Activated CD8-positive, alpha-beta T cell treated with anti-CD3 and anti-CD28 coated beads for 36 hours (primary cell): ENCODE measurements at regions of chr1 and their contacts with region 1.

Region 1: DNA sequence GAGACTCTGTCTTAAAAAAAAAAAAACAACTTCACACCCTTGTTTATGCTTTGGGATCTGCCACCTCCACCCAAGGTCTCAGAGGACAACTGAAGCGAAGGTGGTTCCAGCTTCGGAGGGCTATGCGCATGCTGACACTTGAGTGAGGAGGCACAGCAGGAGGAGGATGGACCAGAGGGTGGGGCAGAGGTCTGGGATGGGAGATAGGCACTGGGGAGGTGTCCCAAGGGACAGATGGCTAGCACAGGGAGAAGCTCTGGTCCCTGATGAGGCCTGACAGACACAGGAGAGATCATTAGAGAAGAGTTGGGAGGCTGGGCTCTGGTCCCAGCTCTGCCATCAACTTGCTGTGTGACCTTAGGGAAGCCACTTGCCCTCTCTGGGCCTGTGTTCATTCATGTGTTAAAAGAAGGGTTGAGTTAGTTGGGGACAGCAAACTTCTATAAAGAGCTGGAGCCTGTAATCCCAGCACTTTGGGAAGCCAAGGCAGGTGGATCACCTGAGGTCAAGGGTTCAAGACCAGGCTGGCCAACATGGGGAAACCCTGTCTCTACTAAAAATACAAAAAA is 16.8 kb downstream of the E2F2 start:
- DNase-seq: no peak
- ATAC-seq: no peak
- H3K4me3 Mint-ChIP-seq: no peak overlapping the region
- H3K27ac Mint-ChIP-seq: no peak overlapping the region
- H3K4me1 Mint-ChIP-seq: no peaks in the 10 kb centered on the region
- H3K27me3 Mint-ChIP-seq: no peaks in the 10 kb centered on the region
- CTCF ChIP-seq: no peak

Region 2: GRCh38 chr1:23530747-23531561 is 16.8 kb after region 1 on chr1 and contains the start of gene E2F2:
- CTCF ChIA-PET with region 1: interaction called, 10 read pairs
- POLR2A ChIA-PET with region 1: interaction called, 22 read pairs
- intact Hi-C with region 1: no loop called
- DNase-seq: peak; percentile 89
- ATAC-seq: peak; percentile 75
- H3K4me3 Mint-ChIP-seq: peak within 1 kb of the TSS; percentile 86
- H3K27ac Mint-ChIP-seq: peak within 1 kb of the TSS; percentile 97
- H3K4me1 Mint-ChIP-seq: peaks cover 59% of the 10 kb centered on the region
- H3K27me3 Mint-ChIP-seq: no peaks in the 10 kb centered on the region
- CTCF ChIP-seq: no peak
- total RNA-seq, gene E2F2: 23.7 to 25.3 TPM